CD4-positive, alpha-beta T cell (primary cell): ENCODE measurements at regions of chr2 and their contacts with region 1.

Region 1: GRCh38 chr2:44244129-44244871 is 31.0 kb upstream of the SLC3A1 start:
- DNase-seq: peak; percentile 25 to 86 (median 41)
- ATAC-seq: peak; percentile 95
- H3K4me3 ChIP-seq: peak overlapping the region; percentile 42
- H3K4me3 Mint-ChIP-seq: peak overlapping the region; percentile 94
- H3K27ac ChIP-seq: no peak overlapping the region
- H3K27ac Mint-ChIP-seq: peak overlapping the region; percentile 37
- H3K4me1 ChIP-seq: no peaks in the 10 kb centered on the region
- H3K4me1 Mint-ChIP-seq: peaks cover 36% of the 10 kb centered on the region
- H3K27me3 ChIP-seq: no peaks in the 10 kb centered on the region
- H3K27me3 Mint-ChIP-seq: no peaks in the 10 kb centered on the region
- CTCF ChIP-seq: peak; percentile 71

Region 2: GRCh38 chr2:43995733-43996533 is 248.4 kb before region 1 on chr2 and contains the start of gene LRPPRC:
- CTCF ChIA-PET with region 1: no interaction called
- POLR2A ChIA-PET with region 1: no interaction called
- intact Hi-C with region 1: loop called in 1 of 2 experiments (anchors 10 kb)
- DNase-seq: peak; percentile 80 to 96 (median 85)
- ATAC-seq: peak; percentile 95
- H3K4me3 ChIP-seq: peak within 1 kb of the TSS; percentile 99
- H3K4me3 Mint-ChIP-seq: peak within 1 kb of the TSS; percentile 91
- H3K27ac ChIP-seq: peak within 1 kb of the TSS; percentile 74 to 91
- H3K27ac Mint-ChIP-seq: peak within 1 kb of the TSS; percentile 89
- H3K4me1 ChIP-seq: peaks cover 32% of the 10 kb centered on the region
- H3K4me1 Mint-ChIP-seq: peaks cover 47% of the 10 kb centered on the region
- H3K27me3 ChIP-seq: no peaks in the 10 kb centered on the region
- H3K27me3 Mint-ChIP-seq: peaks cover 6% of the 10 kb centered on the region
- CTCF ChIP-seq: no peak
- total RNA-seq, gene LRPPRC: 55.2 to 55.4 TPM

Region 3: DNA sequence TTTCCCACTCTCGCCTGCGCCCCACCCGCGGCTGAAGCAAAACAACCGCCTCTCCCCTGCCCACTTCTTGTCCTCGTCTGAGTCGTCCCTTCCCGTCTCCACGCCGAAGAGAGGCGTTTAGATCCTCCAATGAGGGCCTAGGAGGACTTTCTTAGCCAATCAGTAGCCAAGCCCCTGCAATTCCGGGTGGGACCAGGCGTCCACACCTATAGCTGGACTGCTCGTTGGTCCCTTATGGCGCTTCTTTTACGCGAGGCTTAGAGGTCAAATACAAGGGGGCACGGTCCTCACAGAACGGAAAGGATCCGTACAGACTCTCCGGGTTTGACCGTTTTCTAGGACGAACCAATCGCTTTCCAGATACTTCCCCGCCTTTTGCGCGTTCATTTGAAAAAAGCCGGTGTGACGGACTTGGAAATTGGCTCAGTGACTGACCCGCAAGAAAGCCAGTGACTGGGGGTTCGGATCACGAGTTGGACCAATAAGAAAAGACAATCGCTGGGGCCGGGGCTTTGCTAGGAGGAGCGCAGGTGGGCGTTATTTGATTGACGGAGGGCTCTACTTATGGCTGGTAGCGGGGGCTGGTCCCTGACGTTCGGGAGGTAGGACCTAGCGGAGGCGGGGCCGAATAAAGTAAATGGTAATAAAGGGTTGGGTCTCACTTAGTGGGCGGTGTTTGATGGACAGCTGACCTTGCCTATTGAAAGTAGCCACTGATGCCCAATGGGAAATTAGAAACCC is 76.2 kb before region 1 on chr2:
- CTCF ChIA-PET with region 1: interaction called, 3 read pairs
- POLR2A ChIA-PET with region 1: interaction called, 7 read pairs
- intact Hi-C with region 1: loop called (anchors 5 kb)
- DNase-seq: peak in 13 of 14 experiments; percentile 91 to 100 (median 95)
- ATAC-seq: peak; percentile 78
- H3K4me3 ChIP-seq: peak overlapping the region; percentile 61
- H3K4me3 Mint-ChIP-seq: peak overlapping the region; percentile 99
- H3K27ac ChIP-seq: peak overlapping the region; percentile 98
- H3K27ac Mint-ChIP-seq: peak overlapping the region; percentile 99
- H3K4me1 ChIP-seq: peaks cover 20% of the 10 kb centered on the region
- H3K4me1 Mint-ChIP-seq: peaks cover 36% of the 10 kb centered on the region
- H3K27me3 ChIP-seq: no peaks in the 10 kb centered on the region
- H3K27me3 Mint-ChIP-seq: no peaks in the 10 kb centered on the region
- CTCF ChIP-seq: no peak

Region 4: DNA sequence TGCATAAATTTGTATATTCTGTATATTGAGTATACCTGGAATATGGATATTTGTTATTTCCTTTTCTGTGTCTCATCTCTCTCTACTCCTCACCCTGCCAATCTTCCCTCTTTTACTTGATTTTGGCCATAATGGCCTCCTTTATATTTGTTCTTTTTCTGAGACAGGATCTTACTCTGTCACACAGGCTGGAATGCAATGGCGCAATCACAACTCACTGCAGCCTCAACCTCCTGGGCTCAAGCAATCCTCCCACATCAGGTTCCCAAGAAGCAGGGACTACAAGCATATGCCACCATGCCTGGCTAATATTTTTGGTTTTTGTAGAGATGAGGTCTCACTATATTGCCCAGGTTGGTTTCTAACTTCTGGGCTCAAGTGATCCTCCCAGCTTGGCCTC is 86.5 kb after region 1 on chr2:
- CTCF ChIA-PET with region 1: no interaction called
- POLR2A ChIA-PET with region 1: no interaction called
- intact Hi-C with region 1: no loop called
- DNase-seq: no peak
- ATAC-seq: no peak
- H3K4me3 ChIP-seq: no peak overlapping the region
- H3K4me3 Mint-ChIP-seq: no peak overlapping the region
- H3K27ac ChIP-seq: no peak overlapping the region
- H3K27ac Mint-ChIP-seq: no peak overlapping the region
- H3K4me1 ChIP-seq: no peaks in the 10 kb centered on the region
- H3K4me1 Mint-ChIP-seq: peaks cover 5% of the 10 kb centered on the region
- H3K27me3 ChIP-seq: no peaks in the 10 kb centered on the region
- H3K27me3 Mint-ChIP-seq: no peaks in the 10 kb centered on the region
- CTCF ChIP-seq: no peak

Region 5: GRCh38 chr2:44342854-44343253 is 98.6 kb after region 1 on chr2:
- CTCF ChIA-PET with region 1: no interaction called
- POLR2A ChIA-PET with region 1: interaction called, 4 read pairs
- intact Hi-C with region 1: loop called (anchors 2 to 5 kb)
- DNase-seq: peak in 6 of 14 experiments; percentile 7 to 61 (median 32)
- ATAC-seq: peak; percentile 68
- H3K4me3 ChIP-seq: no peak overlapping the region
- H3K4me3 Mint-ChIP-seq: no peak overlapping the region
- H3K27ac ChIP-seq: no peak overlapping the region
- H3K27ac Mint-ChIP-seq: no peak overlapping the region
- H3K4me1 ChIP-seq: no peaks in the 10 kb centered on the region
- H3K4me1 Mint-ChIP-seq: peaks cover 10% of the 10 kb centered on the region
- H3K27me3 ChIP-seq: no peaks in the 10 kb centered on the region
- H3K27me3 Mint-ChIP-seq: no peaks in the 10 kb centered on the region
- CTCF ChIP-seq: peak; percentile 44

Region 6: DNA sequence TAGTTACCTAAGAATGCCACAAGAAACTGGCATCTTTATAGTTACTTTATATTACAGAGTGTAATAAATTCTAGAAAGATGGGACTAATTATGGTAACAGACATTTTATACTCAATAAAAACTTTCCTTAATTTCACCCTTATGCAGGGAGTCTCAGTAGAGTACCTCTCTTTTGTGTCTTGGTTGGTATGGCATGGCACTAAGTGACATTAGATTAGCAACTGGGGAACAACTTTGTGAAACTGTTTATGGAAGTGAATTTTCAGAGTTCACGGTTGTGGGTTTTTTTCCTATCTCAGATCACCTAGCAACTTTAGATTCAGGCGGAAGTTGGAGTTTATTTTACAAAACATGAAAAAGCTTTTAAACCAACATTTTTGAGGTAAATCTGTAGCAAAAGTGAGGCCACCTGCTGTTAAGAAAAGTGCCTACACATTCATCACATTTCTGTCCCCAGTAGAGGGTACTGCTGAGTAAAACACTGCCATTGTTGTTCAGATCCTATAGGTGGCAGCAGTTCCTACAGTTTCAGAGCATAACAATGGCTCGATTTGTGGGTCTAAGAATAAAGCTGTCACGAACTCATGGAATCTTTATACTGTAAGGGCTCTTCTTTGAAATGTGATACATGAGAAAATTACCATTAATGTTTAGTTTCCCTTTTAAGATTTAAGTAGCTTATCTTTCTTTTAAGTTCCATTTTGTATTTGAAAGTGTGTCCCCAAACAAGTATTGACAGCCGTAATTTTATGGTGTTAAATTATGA is 235.0 kb after region 1 on chr2:
- CTCF ChIA-PET with region 1: interaction called, 3 read pairs
- POLR2A ChIA-PET with region 1: no interaction called
- intact Hi-C with region 1: loop called in 1 of 2 experiments (anchors 10 kb)
- DNase-seq: peak in 10 of 14 experiments; percentile 1 to 82 (median 22)
- ATAC-seq: peak; percentile 100
- H3K4me3 ChIP-seq: no peak overlapping the region
- H3K4me3 Mint-ChIP-seq: no peak overlapping the region
- H3K27ac ChIP-seq: no peak overlapping the region
- H3K27ac Mint-ChIP-seq: peak overlapping the region; percentile 27
- H3K4me1 ChIP-seq: no peaks in the 10 kb centered on the region
- H3K4me1 Mint-ChIP-seq: peaks cover 9% of the 10 kb centered on the region
- H3K27me3 ChIP-seq: no peaks in the 10 kb centered on the region
- H3K27me3 Mint-ChIP-seq: no peaks in the 10 kb centered on the region
- CTCF ChIP-seq: peak; percentile 100